ENCODE measurements at regions of chr11 and their contacts with region 1.

Region 1: DNA sequence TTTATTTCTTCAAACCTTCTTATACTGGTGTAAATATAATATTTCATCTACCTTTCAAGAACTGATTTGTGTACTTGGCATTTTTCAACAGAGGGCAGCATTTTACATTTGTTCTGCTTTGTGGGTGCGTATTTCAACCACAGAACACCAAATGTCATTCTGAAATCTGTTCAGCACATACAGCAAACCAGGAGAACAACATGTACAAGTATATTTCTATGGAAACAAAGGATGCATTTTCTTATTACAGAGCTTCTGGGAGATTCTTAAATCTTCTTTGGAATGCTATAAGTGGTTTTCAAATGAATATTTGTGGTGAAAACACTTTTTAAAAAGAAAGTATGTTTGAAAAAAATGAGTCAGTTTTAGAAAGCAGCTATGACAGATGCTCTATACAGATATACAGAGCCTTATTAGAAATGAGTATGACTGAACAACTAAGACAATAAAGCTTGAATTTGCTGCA is 946.0 kb downstream of the FAM181B start:
- DNase-seq: peak in 3 of 9 experiments; percentile 7 to 70 (median 59)
- ATAC-seq: peak; percentile 38
- H3K4me3 ChIP-seq: no peak overlapping the region
- H3K4me3 Mint-ChIP-seq: no peak overlapping the region
- H3K27ac ChIP-seq: no peak overlapping the region
- H3K27ac Mint-ChIP-seq: no peak overlapping the region
- H3K4me1 ChIP-seq: no peaks in the 10 kb centered on the region
- H3K4me1 Mint-ChIP-seq: peaks cover 8% of the 10 kb centered on the region
- H3K27me3 ChIP-seq: no peaks in the 10 kb centered on the region
- H3K27me3 Mint-ChIP-seq: no peaks in the 10 kb centered on the region
- CTCF ChIP-seq: peak; percentile 57

Region 2: GRCh38 chr11:81839016-81839415 is 51.4 kb after region 1 on chr11:
- CTCF ChIA-PET with region 1: no interaction called
- POLR2A ChIA-PET with region 1: no interaction called
- intact Hi-C with region 1: no loop called
- DNase-seq: no peak
- ATAC-seq: no peak
- H3K4me3 ChIP-seq: no peak overlapping the region
- H3K4me3 Mint-ChIP-seq: no peak overlapping the region
- H3K27ac ChIP-seq: no peak overlapping the region
- H3K27ac Mint-ChIP-seq: no peak overlapping the region
- H3K4me1 ChIP-seq: no peaks in the 10 kb centered on the region
- H3K4me1 Mint-ChIP-seq: peaks cover 6% of the 10 kb centered on the region
- H3K27me3 ChIP-seq: no peaks in the 10 kb centered on the region
- H3K27me3 Mint-ChIP-seq: no peaks in the 10 kb centered on the region
- CTCF ChIP-seq: no peak

Region 3: GRCh38 chr11:81869351-81870065 is 81.9 kb after region 1 on chr11:
- CTCF ChIA-PET with region 1: interaction called, 3 read pairs
- POLR2A ChIA-PET with region 1: interaction called, 3 read pairs
- intact Hi-C with region 1: loop called in 1 of 2 experiments (anchors 5 kb)
- DNase-seq: peak; percentile 58 to 96 (median 78)
- ATAC-seq: peak; percentile 82
- H3K4me3 ChIP-seq: peak overlapping the region; percentile 30 to 31
- H3K4me3 Mint-ChIP-seq: peak overlapping the region; percentile 89
- H3K27ac ChIP-seq: peak overlapping the region; percentile 39 to 65
- H3K27ac Mint-ChIP-seq: peak overlapping the region; percentile 97
- H3K4me1 ChIP-seq: peaks cover 45% of the 10 kb centered on the region
- H3K4me1 Mint-ChIP-seq: peaks cover 52% of the 10 kb centered on the region
- H3K27me3 ChIP-seq: no peaks in the 10 kb centered on the region
- H3K27me3 Mint-ChIP-seq: no peaks in the 10 kb centered on the region
- CTCF ChIP-seq: no peak

Region 4: DNA sequence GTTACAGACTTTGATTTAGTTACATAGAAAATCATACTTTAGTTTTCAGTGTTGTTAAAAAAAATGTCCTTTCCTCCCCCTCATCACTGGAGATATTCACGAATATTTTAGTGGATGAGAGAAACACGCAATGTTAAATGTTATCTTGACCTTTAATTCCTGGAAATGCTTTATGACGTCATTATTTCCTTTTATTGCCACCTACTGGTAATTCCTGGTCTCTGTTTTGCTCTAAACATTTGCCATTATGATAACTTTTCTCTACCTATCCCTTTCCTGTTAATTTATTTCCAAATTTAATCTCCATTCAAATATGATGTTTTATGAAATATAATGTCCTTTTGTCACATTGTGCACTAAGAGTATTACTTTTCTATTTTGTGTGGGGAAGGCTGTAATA is 175.4 kb after region 1 on chr11:
- CTCF ChIA-PET with region 1: interaction called, 22 read pairs
- POLR2A ChIA-PET with region 1: no interaction called
- intact Hi-C with region 1: loop called (anchors 1 to 5 kb)
- DNase-seq: peak in 2 of 9 experiments; percentile 28 to 42
- ATAC-seq: no peak
- H3K4me3 ChIP-seq: no peak overlapping the region
- H3K4me3 Mint-ChIP-seq: no peak overlapping the region
- H3K27ac ChIP-seq: no peak overlapping the region
- H3K27ac Mint-ChIP-seq: no peak overlapping the region
- H3K4me1 ChIP-seq: peaks cover 7% of the 10 kb centered on the region
- H3K4me1 Mint-ChIP-seq: peaks cover 13% of the 10 kb centered on the region
- H3K27me3 ChIP-seq: no peaks in the 10 kb centered on the region
- H3K27me3 Mint-ChIP-seq: no peaks in the 10 kb centered on the region
- CTCF ChIP-seq: no peak

Region 5: DNA sequence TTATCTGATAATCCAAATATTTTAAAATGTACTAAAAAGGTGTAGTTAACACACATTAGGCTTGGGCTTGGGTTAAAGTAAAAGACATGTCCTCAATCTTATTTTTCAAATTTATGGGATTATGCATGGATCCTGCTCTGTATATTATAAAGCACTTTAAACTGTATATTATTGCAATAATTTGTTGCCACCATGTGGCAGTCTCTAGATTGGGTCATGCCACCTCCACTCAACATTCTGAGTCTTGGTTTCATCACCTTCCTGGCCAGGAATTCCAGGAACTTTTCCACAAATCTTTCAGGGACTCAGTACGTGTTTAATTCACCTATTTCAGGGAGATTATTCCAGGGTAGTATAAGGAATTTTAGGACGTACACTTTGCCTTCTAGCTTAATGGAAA is 250.5 kb after region 1 on chr11:
- CTCF ChIA-PET with region 1: interaction called, 10 read pairs
- POLR2A ChIA-PET with region 1: no interaction called
- intact Hi-C with region 1: loop called in 1 of 2 experiments (anchors 1 kb)
- DNase-seq: peak in 2 of 9 experiments; percentile 3 to 6
- ATAC-seq: no peak
- H3K4me3 ChIP-seq: no peak overlapping the region
- H3K4me3 Mint-ChIP-seq: no peak overlapping the region
- H3K27ac ChIP-seq: no peak overlapping the region
- H3K27ac Mint-ChIP-seq: no peak overlapping the region
- H3K4me1 ChIP-seq: no peaks in the 10 kb centered on the region
- H3K4me1 Mint-ChIP-seq: no peaks in the 10 kb centered on the region
- H3K27me3 ChIP-seq: no peaks in the 10 kb centered on the region
- H3K27me3 Mint-ChIP-seq: no peaks in the 10 kb centered on the region
- CTCF ChIP-seq: no peak

Region 6: GRCh38 chr11:82043316-82043715 is 255.7 kb after region 1 on chr11:
- CTCF ChIA-PET with region 1: interaction called, 10 read pairs
- POLR2A ChIA-PET with region 1: no interaction called
- intact Hi-C with region 1: loop called in 1 of 2 experiments (anchors 1 kb)
- DNase-seq: no peak
- ATAC-seq: no peak
- H3K4me3 ChIP-seq: no peak overlapping the region
- H3K4me3 Mint-ChIP-seq: no peak overlapping the region
- H3K27ac ChIP-seq: no peak overlapping the region
- H3K27ac Mint-ChIP-seq: no peak overlapping the region
- H3K4me1 ChIP-seq: no peaks in the 10 kb centered on the region
- H3K4me1 Mint-ChIP-seq: no peaks in the 10 kb centered on the region
- H3K27me3 ChIP-seq: no peaks in the 10 kb centered on the region
- H3K27me3 Mint-ChIP-seq: peaks cover 2% of the 10 kb centered on the region
- CTCF ChIP-seq: no peak

Region 7: GRCh38 chr11:82229341-82229740 is 441.7 kb after region 1 on chr11:
- CTCF ChIA-PET with region 1: interaction called, 6 read pairs
- POLR2A ChIA-PET with region 1: no interaction called
- intact Hi-C with region 1: loop called (anchors 1 to 2 kb)
- DNase-seq: peak in 2 of 9 experiments; percentile 24 to 42
- ATAC-seq: no peak
- H3K4me3 ChIP-seq: no peak overlapping the region
- H3K4me3 Mint-ChIP-seq: no peak overlapping the region
- H3K27ac ChIP-seq: no peak overlapping the region
- H3K27ac Mint-ChIP-seq: no peak overlapping the region
- H3K4me1 ChIP-seq: no peaks in the 10 kb centered on the region
- H3K4me1 Mint-ChIP-seq: no peaks in the 10 kb centered on the region
- H3K27me3 ChIP-seq: no peaks in the 10 kb centered on the region
- H3K27me3 Mint-ChIP-seq: peaks cover 3% of the 10 kb centered on the region
- CTCF ChIP-seq: no peak

Region 8: DNA sequence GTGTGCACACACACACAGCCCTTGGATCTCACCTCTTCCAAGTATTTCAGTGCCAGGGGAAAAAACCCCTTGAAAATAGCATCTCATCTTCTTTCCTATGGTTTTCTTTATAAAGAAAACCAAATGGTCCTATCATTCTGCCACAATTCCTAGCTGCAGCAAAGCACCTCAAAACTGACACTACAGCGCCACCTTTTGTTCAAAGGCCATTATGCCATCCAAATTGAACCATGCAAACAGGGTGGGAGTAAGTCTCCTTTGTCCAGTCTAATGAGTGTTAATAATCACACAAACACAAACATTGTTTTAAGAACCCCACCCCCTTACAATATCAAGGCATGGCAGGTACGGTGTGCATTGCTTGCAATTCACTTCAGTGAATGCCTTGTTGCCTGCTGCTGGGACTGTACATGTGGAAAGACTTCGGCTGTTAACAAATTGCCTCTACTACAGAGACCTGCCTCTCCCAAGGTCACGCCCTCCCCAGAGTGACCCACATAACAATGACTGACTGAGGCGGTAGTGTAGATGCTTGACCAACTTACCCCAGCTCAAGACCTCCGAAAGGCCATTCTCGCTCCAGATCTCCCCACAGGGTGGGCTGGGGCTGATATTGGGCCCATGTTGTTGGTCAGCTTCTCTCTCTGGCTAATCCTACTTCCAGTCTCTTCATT is 914.4 kb after region 1 on chr11:
- CTCF ChIA-PET with region 1: no interaction called
- POLR2A ChIA-PET with region 1: no interaction called
- intact Hi-C with region 1: loop called in 1 of 2 experiments (anchors 5 kb)
- DNase-seq: peak in 2 of 9 experiments; percentile 6 to 20
- ATAC-seq: no peak
- H3K4me3 ChIP-seq: no peak overlapping the region
- H3K4me3 Mint-ChIP-seq: no peak overlapping the region
- H3K27ac ChIP-seq: no peak overlapping the region
- H3K27ac Mint-ChIP-seq: no peak overlapping the region
- H3K4me1 ChIP-seq: no peaks in the 10 kb centered on the region
- H3K4me1 Mint-ChIP-seq: no peaks in the 10 kb centered on the region
- H3K27me3 ChIP-seq: peaks cover 0 to 3% of the 10 kb centered on the region in 2 experiments
- H3K27me3 Mint-ChIP-seq: peaks cover 17% of the 10 kb centered on the region
- CTCF ChIP-seq: peak; percentile 56